ENCODE measurements at regions of chr12 and their contacts with region 1.

Region 1: DNA sequence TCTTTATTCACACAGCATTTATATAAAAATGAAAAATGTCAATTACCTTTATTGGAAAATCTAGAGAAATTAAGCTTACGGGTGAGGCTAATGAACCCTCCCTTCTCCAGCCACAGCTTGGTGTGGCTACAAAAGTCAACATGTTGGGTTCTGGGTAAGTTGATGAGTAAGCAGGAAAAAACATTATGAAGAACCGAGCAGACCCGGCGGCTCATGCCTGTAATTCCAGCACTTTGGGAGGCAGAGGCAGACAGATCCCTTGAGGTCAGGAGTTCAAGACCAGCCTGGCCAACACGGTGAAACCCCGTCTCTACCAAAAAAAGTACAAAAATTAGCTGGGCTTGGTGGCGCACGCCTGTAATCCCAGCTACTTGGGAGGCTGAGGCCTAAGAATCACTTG is 10.9 kb downstream of the NAA25 start:
- DNase-seq: no peak
- H3K27ac ChIP-seq: peak overlapping the region; percentile 43
- CTCF ChIP-seq: no peak

Region 2: DNA sequence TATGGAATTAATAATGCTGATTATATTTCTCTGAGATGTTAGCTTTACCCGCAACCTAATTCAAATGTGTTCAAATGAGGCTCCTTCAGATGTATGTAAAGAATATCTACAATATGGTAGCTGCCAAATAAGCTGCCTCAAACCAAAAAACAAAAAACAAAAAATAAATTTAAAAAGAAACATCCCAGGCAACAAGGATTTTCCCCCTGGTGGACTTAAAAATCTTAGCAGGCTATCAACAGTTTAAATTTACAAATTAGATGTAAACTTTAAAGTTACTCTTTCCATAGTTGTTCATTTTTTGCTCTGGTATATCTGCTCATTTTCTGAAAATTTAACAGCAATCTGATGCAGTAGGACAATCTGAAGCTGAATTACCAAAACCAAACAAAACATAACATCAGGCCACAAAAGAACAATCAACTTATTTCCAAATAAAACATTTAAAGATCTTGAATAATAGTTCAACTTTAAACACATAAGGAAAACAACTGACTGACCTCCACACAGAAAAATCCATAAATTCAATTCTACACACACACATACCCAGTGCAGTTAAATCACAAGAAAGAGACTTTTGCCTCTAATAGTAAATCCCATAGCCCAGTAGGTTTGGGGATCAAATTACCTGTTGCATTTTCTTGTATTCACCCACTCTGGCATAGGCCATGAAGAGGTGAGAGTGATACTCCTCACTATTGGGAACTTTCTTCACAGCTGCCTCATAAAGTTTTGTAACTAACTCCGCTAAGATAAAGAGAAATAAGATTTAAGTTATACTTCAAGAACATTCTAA is 10.4 kb before region 1 on chr12:
- CTCF ChIA-PET with region 1: interaction called, 11 read pairs
- POLR2A ChIA-PET with region 1: interaction called, 3 read pairs
- DNase-seq: no peak
- H3K27ac ChIP-seq: no peak overlapping the region
- CTCF ChIP-seq: no peak

Region 3: DNA sequence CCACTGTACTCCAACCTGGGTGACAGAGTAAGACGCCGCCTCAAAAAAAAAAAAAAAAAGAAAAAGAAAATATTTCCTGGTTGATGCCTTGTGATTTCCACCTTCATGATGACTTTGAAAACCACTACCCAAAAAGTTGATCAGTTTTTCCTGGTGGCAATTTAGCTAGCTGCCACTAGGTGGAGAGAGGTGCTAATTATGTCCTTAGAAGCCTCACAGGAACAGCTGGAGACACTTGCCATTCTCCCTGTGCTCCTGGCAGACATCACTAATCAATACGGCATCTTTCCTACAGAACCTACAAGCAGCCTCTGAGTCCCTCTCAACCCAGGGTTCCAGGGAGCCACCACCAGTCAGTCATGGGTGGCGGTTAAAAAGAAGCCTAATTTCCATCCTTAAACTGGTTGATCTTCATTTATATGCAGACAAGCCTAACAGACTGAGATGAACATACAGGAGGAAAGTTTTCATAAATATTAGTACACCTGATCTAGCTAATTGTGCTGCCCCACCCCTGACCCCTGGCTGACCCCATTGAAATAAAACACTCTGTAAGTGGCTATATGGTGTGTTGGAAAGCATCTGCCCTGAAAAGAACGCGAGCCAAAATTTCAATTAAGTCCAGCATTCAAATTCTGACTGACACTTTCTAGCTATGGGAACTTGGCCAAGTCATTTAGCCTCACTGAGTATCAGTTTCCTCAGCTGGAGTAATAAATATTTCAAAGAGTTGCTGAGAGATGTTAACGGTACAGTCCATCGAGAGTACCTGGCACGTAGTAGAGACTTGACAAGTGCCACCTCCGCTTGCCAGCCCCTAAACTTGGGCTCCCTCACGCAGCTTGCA is 802.9 kb after region 1 on chr12:
- CTCF ChIA-PET with region 1: no interaction called
- POLR2A ChIA-PET with region 1: no interaction called
- DNase-seq: peak; percentile 64
- H3K27ac ChIP-seq: no peak overlapping the region
- CTCF ChIP-seq: peak; percentile 75

Measured in RWPE1 (cell line).